OCI-LY7 (cell line): ENCODE measurements at regions of chr1 and their contacts with region 1.

Region 1: DNA sequence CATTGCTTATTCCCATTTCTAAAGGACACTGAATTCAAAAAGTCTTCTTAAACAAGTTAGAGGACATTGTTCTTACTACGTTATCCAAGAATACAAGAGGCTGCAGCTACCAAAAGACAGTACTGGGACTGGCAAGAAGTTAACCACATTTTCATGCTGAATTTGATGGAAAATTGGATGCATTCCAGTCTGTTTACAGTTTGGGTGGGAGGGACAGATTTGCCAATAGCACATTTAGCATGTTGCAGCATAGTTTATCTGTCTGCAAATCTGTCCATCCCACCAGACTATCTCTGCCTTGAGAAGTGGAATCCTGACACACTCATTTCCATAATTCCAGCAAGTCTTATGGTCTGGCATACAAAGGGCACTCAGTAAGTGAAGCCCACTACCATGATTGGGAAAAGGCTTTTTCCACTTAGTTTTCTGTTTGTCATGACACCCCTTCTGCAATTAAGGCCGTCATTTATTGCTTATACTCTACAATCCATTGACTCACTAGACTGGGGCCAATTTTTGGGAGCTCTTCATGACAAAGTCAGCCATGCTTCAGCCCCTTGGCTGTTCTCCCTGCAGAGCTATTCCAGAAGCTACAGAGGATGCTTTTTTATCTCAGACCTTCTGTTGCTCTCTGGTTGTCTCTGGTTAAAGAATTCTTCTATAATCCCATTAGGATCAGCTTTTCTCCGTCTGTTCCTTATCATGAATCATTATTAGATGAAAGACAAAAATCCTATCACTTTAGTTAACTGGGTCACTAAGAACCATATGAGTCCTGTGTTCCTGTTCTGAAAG is 355.8 kb upstream of the PTBP2 start:
- DNase-seq: no peak
- H3K4me3 ChIP-seq: no peak overlapping the region
- H3K27ac ChIP-seq: no peak overlapping the region
- H3K4me1 ChIP-seq: no peaks in the 10 kb centered on the region
- CTCF ChIP-seq: no peak

Region 2: GRCh38 chr1:96349896-96350295 is 15.9 kb before region 1 on chr1:
- CTCF ChIA-PET with region 1: no interaction called
- POLR2A ChIA-PET with region 1: no interaction called
- intact Hi-C with region 1: loop called (anchors 2 kb)
- DNase-seq: no peak
- H3K4me3 ChIP-seq: no peak overlapping the region
- H3K27ac ChIP-seq: no peak overlapping the region
- H3K4me1 ChIP-seq: no peaks in the 10 kb centered on the region
- CTCF ChIP-seq: no peak

Region 3: GRCh38 chr1:96498744-96499340 is 133.0 kb after region 1 on chr1:
- CTCF ChIA-PET with region 1: no interaction called
- POLR2A ChIA-PET with region 1: no interaction called
- intact Hi-C with region 1: no loop called
- DNase-seq: no peak
- H3K4me3 ChIP-seq: no peak overlapping the region
- H3K27ac ChIP-seq: no peak overlapping the region
- H3K4me1 ChIP-seq: no peaks in the 10 kb centered on the region
- CTCF ChIP-seq: no peak